Right ventricle myocardium inferior (tissue), 1 donor: ENCODE measurements at regions of chr12 and their contacts with region 1.

Region 1: DNA sequence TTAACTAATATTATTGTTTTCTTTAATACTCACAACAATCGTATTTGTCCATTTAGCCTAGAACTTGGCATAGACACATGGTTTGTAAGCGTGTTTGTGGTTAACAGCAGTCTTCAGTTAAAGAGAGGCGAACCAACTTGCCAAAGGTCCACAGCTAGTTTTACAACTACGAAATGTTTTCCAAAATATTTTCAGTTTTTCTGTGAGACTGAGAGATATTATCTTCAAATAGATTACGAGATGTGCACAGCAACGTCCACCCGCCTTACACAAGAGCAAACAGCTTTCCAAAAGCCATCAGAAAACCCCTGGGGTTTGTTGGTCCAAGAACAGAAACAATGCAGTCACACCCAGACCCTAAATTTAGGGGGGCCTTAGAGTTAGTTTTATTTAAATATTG is 58.6 kb upstream of the RASSF3 start:
- DNase-seq: no peak
- ATAC-seq: peak; percentile 36

Region 2: DNA sequence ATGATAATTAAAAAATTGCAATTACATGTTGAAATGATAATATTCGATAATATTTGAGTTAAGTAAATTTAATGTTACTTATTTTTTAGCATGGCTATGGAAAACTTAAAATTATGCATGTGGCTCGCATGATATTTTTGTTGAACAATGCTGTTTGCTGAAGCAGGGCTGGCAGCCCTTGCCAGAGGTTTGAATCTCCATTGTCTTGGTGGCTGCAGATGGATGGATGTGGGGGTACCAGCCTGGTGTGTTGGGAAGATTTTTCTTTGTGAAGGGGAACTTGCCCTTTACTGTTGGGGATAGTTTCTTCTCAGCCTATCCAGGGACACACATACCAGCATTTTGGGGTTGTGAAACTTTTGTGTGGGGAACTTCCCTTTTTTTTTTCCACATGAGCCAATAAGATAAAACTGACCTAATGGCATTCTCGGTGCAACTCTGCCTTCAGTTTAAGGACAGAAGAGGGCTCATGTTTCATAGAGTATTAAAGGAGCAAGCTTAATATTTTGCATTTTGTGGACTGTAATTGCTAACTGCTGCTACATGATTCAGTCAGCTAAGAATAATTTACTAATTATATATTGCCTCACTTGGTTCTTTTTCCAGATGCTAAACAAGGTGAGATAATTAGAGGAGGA is 67.4 kb after region 1 on chr12:
- intact Hi-C with region 1: no loop called
- DNase-seq: no peak
- ATAC-seq: peak; percentile 76

Region 3: DNA sequence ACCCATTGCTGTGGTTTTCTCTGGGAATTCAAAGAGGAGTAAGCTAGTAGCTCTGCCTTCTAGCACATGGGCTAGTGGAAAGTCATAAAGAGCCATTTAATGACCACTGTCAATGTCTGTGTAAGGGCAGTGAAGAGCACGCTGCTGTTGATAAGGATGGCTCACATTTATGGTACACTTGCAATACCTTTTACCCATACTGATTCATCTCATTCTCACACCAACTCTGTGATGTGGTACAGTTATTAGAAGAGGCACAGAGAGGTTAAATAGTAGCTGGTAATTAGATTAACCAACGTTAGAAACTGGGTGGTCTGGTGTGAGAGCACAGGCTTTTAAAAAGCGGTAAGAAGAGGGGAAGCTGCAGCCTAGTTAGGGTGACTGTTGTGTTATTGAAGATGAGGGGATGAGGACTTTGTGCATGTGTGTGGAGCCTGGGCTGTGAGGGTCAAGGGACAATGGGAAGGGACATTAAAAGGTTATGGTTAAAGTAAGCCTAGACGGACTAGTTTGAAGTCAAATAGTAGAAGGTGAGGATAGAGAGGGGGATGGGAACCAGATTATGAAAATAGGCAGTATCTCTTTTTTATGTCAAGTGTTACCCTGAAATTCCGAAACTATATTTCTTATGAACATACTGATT is 83.8 kb after region 1 on chr12:
- intact Hi-C with region 1: no loop called
- DNase-seq: no peak
- ATAC-seq: no peak

Region 4: DNA sequence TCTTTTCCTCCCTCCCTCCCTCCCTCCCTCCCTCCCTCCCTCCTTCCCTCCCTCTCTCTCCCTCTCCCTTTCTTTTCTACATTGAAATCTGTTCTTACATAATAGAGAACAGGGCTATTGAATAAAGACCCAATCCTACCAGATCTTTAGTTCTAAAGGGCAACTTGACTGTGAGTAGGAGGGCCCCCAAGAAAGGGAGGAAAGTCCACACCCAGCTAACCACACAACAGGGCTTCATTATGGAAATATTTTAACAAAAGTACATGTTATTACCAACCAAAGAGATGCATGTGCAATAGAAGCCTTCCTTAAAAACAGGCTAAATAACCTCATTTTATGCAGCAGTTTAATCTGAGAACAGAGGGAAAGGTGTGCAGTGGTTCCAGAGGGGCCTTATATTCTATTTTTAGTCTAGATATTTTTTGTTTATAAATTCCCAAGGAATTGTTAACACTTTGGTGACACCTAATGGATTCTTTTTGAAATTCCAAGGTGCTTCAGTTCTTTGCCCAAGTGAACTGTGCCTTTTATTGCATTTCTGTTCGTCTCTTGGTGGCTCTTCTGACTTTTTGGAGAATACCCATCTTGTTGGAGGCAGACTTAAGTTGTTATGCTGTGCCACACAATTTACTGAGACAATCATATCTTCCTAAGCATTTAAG is 144.5 kb after region 1 on chr12:
- intact Hi-C with region 1: loop called (anchors 1 kb)
- DNase-seq: no peak
- ATAC-seq: no peak

Region 5: DNA sequence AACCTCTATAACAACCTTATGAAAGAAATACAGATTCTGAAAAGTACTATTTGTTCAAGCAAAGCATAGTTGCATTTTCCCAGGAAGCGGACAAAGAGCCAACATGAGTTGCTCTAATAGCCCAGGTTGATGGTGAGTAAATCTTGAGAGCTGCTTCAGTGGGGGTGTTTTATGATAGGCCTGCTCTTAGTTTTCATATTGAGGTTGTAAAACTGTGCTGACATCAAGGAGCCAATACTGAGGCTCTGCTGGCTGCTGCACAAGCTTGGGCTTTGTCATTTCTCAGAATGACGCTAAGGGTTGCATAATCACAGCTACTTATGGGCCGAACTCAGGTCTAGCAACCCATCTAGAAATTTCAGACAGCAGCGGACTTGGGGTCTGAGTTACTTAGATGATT is 284.2 kb after region 1 on chr12:
- intact Hi-C with region 1: no loop called
- DNase-seq: no peak
- ATAC-seq: no peak